Right ventricle myocardium inferior (tissue), 1 donor: ENCODE measurements at regions of chr13 and their contacts with region 1.

Region 1: DNA sequence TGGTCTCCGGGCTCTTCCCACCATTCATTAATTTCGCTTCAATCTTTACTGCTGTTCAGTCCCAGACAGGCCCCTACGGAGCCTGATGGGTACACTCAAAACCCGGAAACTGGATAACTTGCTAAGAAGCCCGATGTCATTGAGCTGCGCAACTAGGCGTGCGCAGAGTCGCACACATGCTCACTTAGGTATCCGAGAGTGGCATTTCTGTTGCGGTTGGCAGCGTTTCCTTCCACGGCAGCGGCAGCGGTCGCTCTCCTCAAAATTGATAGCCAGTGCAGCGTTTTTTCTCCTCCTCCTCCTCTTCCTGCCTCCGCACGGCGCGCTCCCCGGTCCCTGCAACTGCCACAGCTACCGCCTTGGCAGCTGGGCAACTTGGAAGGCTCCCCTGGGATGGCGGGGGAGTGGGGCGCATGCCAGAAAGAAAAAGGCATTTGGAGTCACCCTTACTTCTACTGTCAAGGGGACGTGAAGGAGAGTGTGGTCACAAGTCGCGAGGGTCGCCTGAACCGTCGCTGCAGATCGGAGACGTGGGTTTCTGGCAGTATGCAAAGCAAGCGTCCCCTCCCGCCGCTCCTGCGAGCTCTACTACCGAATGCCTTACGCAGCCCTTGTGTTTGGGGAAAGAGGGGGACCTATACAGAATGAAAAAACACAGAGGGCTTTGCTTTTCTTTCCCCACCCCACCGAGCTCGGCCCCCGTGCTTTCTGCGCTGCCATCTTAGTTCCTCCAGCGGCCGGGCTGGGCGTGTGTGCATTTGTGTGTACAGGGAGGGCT is 2.4 kb upstream of the MYCBP2 start:
- DNase-seq: peak; percentile 93
- ATAC-seq: peak; percentile 86

Region 2: GRCh38 chr13:77026818-77027585 is 302.3 kb before region 1 on chr13 and contains the start of gene FBXL3:
- intact Hi-C with region 1: loop called (anchors 5 kb)
- DNase-seq: peak; percentile 94
- ATAC-seq: peak; percentile 88
- total RNA-seq, gene FBXL3: 29.3 TPM

Region 3: DNA sequence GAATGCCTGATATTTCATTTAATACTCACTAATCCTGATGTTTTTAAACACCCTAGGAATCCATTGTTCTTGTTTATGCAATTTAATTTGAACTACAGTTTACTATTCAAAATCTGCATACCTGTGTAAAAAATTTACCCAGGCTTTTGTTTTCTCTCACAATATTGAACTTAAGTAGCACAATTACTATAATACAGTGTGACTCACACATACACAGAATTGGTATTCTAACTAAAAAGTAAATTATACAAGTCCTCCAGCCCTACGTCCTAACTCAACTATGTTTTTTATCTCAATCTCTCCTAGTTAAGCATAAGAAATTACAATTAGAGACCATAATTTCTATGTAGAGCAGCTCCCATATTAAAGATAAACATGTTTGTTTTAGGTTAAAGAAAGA is 44.2 kb before region 1 on chr13:
- intact Hi-C with region 1: loop called (anchors 5 kb)
- DNase-seq: no peak
- ATAC-seq: no peak

Region 4: DNA sequence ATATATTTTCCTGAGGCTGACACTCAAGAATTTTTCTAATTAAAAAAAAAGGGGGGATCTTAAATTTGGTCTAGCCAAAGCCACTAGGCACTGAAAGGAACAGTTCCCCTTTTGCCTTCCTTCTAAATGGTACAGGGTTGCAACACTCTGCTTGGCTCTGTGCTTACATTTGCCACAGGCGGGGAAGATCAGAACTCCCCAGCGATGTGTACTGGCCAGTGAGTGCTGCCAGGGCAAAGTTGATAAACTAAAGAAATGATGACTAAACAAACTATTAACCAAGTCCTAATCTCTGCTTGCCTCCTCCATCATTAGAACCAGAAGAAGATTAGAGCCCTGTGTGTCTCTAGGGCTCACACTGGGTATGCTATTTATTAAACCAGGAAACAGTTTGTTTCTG is 130.9 kb after region 1 on chr13:
- intact Hi-C with region 1: no loop called
- DNase-seq: peak; percentile 72
- ATAC-seq: peak; percentile 97

Region 5: DNA sequence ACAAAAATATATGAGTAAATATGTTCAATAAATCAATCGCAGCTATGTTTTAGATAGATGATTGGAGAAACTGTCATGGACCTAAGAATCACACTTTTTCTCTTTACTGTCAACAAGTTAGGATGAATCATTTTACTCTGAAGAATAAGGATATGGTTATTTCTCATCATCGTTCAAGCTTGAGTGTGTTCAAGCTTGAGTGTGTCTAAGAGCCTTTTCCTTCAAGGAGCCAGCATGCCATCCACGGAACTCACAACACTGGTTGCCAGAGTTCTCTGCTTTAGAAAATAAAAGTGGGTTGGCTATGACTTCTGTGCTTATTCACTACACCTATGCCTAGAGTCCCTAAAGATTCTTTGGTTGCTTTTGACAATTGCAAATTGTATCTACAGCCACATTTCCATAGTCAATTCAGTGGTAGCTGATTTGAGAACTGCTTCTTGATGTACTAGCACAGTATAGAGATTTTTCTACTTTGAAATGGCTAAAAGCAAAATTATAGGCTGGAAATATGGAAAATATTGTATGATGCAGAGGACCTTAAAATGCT is 148.1 kb after region 1 on chr13:
- intact Hi-C with region 1: loop called (anchors 5 kb)
- DNase-seq: no peak
- ATAC-seq: no peak

Region 6: DNA sequence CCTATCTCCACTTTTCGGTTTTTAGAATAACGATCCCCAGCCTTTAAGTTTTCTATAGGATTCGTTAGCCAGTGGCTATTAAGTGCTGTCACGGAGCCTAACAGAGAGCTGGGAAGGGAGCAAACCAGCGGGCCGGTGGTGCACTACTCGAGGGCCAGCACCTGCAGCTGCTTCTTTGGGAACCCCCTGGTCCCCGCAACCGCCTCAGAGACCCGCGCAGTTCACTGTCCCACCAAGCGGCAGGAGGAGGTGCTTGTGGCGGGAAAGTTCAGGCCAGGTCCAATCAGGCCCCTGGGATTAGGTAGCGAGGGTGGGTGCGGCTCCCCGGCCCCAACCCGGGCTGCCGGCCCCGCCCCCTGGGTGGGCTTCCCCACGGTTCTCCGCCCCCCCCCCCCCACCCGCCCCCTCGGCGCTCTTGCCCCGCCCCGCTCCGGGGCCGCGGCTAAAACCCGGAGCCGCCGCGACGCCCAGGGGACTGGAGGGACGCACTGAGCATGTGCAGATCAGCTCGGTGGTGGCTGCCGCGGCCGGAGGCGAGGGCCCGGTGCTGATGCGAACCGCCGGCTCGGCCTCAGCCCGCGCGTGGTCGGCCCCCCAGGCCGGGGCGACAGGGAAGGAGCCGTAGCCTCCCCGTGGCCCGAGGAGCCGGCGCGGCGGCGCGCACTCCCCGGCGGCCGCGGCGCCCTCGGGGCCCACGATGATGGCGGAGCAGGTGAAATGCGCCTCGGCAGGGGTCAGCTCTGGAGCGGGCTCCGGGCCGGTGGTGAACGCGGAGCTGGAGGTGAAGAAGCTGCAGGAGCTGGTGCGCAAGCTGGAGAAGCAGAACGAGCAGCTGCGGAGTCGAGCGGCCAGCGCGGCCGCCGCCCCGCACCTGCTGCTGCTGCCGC is 368.1 kb after region 1 on chr13 and contains the start of gene SLAIN1:
- intact Hi-C with region 1: loop called (anchors 10 kb)
- DNase-seq: peak; percentile 89
- ATAC-seq: peak; percentile 96
- total RNA-seq, gene SLAIN1: 4.6 TPM